Posterior vena cava (tissue), 2 donors: ENCODE measurements at regions of chrX and their contacts with region 1.

Region 1: DNA sequence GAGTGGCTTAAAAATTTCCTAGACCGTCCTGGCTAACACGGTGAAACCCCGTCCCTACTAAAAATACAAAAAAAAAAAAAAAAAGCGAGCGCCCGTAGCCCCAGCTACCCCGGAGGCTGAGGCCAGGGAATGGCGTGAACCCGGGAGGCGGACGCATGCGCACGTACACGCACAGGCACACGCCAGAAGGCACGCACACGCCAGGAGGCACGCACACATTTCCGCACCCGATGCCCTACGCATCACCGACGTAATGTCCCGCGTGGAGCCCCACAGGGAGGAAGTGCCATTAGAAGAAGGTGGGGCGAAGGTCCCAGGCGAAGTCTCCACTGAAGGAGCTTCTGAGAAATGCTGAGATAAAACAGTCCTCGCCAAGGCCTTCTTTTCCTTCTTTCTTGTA is 41.4 kb downstream of the NLGN4X start:
- DNase-seq: no peak

Region 2: GRCh38 chrX:5775846-5776430 is 411.3 kb before region 1 on chrX:
- intact Hi-C with region 1: no loop called
- DNase-seq: no peak

Region 3: DNA sequence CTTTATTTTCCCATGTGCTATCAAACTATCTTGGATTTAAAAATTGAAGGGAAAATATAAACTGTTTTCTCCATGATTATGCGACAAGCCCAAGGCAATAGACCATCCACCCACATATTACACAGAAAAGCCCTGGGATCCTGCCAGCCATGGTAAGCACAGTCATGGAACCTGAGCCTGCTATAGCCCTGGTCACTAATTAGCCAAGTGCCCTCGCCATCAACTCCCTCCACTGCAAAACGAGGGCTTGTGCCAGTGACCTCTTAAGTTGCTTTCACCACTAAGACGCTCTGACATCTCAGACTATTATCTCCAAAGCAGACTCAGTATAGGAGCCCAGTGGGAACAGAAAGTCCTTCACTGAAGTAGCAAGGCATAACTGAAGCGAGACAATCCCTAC is 27.8 kb before region 1 on chrX:
- intact Hi-C with region 1: loop called in 1 of 2 experiments (anchors 1 kb)
- DNase-seq: no peak